A549 (cell line): ENCODE measurements at regions of chr1 and their contacts with region 1.

Region 1: GRCh38 chr1:36175137-36176095 is 19.5 kb downstream of the MAP7D1 start:
- DNase-seq: no peak
- ATAC-seq: peak in 1 of 2 experiments; percentile 15; a peak in 2 of 6 replicates
- H3K4me3 ChIP-seq: no peak overlapping the region
- H3K27ac ChIP-seq: 0 out of 6 replicates have a peak overlapping the region, but pooled peaks of 1 of the 2 experiments have one; percentile 26
- H3K4me1 ChIP-seq: peaks cover 18% of the 10 kb centered on the region
- CTCF ChIP-seq: no peak
- EP300 ChIP-seq: no peak
- POLR2A ChIP-seq: no peak
- RAD21 ChIP-seq: no peak

Region 2: DNA sequence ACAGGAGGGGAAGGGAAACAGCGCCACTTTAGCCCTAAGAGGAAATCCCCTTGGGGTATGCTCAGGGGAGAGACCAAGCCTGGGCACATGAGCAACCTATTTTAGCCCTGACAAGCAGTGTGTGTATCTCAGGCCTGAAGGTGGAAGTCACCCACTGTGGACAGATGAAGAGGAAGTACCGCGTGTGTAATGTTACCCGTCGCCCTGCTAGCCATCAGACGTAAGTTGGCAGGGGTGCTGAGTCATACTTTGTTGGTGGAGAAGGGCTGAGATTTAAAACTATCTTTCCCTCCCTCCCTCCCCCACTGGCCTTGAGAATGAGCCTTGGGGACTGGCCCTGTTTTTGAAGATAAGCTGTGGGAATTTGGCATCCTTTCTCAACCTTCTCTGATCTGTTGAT is 281.2 kb before region 1 on chr1:
- CTCF ChIA-PET with region 1: no interaction called
- POLR2A ChIA-PET with region 1: no interaction called
- DNase-seq: peak in 1 of 2 experiments; percentile 46
- ATAC-seq: no peak; a peak in 1 of 6 replicates
- H3K4me3 ChIP-seq: no peak overlapping the region
- H3K27ac ChIP-seq: peak overlapping the region; percentile 33 to 73; a peak in 3 of 6 replicates
- H3K4me1 ChIP-seq: peaks cover 10% of the 10 kb centered on the region
- CTCF ChIP-seq: no peak
- EP300 ChIP-seq: no peak
- POLR2A ChIP-seq: no peak
- RAD21 ChIP-seq: no peak

Region 3: DNA sequence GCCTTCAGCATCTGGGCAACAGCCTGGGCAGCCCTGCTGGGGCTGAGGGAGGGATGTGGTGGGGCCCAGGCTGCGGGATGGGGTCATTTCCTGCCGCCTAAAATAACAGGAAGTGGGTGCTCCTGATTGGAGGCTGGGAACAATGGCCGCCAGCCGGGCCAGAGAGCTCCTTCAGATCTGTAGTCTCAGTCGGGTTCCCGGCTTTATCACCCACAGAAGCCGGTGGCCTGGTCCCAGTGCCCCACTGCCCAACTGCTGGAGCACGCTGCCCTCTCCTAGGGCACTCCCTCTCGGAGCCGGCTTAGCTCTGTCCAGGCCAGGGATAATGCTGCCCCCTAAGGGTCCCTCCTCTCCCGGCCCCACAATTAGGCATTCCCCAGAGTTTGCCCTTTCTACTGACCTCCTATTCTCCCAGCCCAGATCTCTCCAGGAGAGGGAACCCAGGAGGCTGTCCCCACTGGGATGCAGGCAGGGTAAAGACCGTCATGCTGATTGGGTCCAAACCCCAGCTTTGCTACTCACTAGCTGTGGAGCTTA is 14.4 kb before region 1 on chr1:
- CTCF ChIA-PET with region 1: interaction called, 16 read pairs
- POLR2A ChIA-PET with region 1: interaction called, 4 read pairs
- DNase-seq: peak; percentile 47 to 48
- ATAC-seq: peak; percentile 65 to 76
- H3K4me3 ChIP-seq: peak overlapping the region; percentile 33
- H3K27ac ChIP-seq: peak overlapping the region; percentile 77 to 83
- H3K4me1 ChIP-seq: peaks cover 61% of the 10 kb centered on the region
- CTCF ChIP-seq: peak; percentile 37
- EP300 ChIP-seq: no peak
- POLR2A ChIP-seq: no peak
- RAD21 ChIP-seq: peak in 1 of 2 experiments; percentile 14; a peak in 1 of 5 replicates